Left cardiac atrium (tissue), 4 donors: ENCODE measurements at regions of chr18 and their contacts with region 1.

Region 1: DNA sequence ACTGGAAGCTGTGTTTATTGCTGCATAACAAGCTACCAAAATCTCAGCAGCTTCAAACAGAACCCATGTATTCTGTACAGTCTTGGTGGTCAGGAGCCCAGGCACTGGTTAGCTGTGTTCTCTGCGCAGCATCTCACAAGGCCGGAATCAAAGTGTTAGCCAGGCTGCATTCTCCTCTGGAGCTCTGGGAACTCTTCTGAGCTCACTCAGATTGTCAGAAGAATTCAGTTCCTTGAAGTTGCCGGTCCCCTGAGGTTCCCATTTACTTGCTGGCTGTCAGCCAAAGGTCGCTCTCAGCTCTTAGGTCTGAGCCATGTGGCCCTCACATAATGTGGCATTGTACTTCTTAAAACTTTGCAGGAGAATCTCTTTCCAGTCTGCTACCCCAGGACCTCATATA is 123.6 kb upstream of the SMIM21 start:
- DNase-seq: no peak
- ATAC-seq: no peak

Region 2: GRCh38 chr18:75183531-75183930 is 367.5 kb before region 1 on chr18:
- intact Hi-C with region 1: loop called in 1 of 2 experiments (anchors 10 kb)
- DNase-seq: no peak
- ATAC-seq: no peak